Activated naive CD4-positive, alpha-beta T cell treated with anti-CD3 and anti-CD28 coated beads for 36 hours (primary cell): ENCODE measurements at regions of chr6 and their contacts with region 1.

Region 1: GRCh38 chr6:169831450-169832246 is 80.2 kb downstream of the ERMARD start:
- DNase-seq: peak; percentile 82
- H3K4me3 Mint-ChIP-seq: no peak overlapping the region
- H3K27ac Mint-ChIP-seq: no peak overlapping the region
- H3K4me1 Mint-ChIP-seq: no peaks in the 10 kb centered on the region
- H3K27me3 Mint-ChIP-seq: peaks cover 35% of the 10 kb centered on the region

Region 2: DNA sequence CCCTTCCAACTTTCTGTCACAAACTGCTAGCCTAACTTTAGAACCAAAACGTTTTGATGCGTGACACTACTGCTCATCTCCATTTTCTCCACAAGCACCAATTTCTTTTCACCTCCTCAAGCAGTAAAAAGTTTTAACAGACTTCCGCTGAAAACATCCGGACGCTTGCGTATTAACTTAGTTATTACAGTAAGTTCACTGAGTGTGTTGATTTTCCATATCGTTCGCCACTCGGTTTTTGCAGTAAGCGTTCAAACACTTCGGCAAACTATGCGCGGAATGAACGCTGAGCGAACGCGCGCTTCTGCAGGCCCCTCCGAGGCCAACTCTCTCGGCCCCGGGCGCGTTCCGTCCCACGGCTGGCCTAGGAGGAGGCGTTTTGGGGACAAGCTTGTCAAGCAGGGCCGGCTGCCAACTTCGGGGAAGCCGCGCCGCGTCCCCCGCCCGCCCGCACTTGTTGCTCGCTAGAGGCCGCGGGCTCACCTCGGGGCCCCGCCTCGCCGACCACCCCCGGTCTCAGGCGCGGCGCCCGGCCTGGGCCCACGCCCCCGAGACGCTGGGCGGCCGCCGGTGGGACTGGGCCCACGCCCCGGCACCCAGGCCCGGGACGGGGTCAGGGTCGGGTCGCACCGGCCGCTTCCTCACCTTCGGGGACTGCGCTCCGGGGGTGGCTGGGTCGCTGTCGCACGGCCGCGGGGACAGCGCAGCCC is 108.3 kb before region 1 on chr6:
- CTCF ChIA-PET with region 1: no interaction called
- intact Hi-C with region 1: no loop called
- DNase-seq: peak; percentile 62
- H3K4me3 Mint-ChIP-seq: peak overlapping the region; percentile 84
- H3K27ac Mint-ChIP-seq: peak overlapping the region; percentile 94
- H3K4me1 Mint-ChIP-seq: peaks cover 43% of the 10 kb centered on the region
- H3K27me3 Mint-ChIP-seq: no peaks in the 10 kb centered on the region

Region 3: GRCh38 chr6:169789982-169790927 is 41.4 kb before region 1 on chr6:
- CTCF ChIA-PET with region 1: interaction called, 9 read pairs
- intact Hi-C with region 1: loop called (anchors 1 kb)
- DNase-seq: peak; percentile 80
- H3K4me3 Mint-ChIP-seq: peak overlapping the region; percentile 79
- H3K27ac Mint-ChIP-seq: no peak overlapping the region
- H3K4me1 Mint-ChIP-seq: peaks cover 17% of the 10 kb centered on the region
- H3K27me3 Mint-ChIP-seq: peaks cover 24% of the 10 kb centered on the region

Region 4: DNA sequence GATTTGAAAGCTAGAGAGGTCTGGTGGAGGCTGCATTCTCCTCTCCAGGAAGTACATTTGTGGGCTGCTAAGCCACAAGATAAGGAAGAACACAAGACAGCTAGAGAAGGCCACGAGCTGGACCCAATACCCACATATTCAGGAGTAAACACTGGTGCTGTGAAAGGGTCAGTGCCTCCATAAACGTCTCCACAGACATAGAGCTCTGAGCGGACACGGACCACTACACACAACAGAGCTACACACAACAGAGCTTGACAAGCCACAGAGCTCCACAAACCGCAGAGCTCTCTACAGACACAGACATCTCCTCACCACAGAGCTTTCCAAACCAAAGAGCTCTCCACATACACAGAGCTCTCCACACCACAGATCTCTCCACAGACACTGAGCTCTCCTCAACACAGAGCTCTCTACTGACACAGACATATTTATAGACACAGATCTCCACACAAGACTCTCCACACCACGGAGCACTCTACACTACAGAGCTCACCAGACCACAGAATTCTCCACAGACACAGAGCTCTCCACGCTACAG is 28.3 kb before region 1 on chr6:
- CTCF ChIA-PET with region 1: interaction called, 32 read pairs
- intact Hi-C with region 1: no loop called
- DNase-seq: no peak
- H3K4me3 Mint-ChIP-seq: no peak overlapping the region
- H3K27ac Mint-ChIP-seq: no peak overlapping the region
- H3K4me1 Mint-ChIP-seq: peaks cover 50% of the 10 kb centered on the region
- H3K27me3 Mint-ChIP-seq: peaks cover 30% of the 10 kb centered on the region

Region 5: DNA sequence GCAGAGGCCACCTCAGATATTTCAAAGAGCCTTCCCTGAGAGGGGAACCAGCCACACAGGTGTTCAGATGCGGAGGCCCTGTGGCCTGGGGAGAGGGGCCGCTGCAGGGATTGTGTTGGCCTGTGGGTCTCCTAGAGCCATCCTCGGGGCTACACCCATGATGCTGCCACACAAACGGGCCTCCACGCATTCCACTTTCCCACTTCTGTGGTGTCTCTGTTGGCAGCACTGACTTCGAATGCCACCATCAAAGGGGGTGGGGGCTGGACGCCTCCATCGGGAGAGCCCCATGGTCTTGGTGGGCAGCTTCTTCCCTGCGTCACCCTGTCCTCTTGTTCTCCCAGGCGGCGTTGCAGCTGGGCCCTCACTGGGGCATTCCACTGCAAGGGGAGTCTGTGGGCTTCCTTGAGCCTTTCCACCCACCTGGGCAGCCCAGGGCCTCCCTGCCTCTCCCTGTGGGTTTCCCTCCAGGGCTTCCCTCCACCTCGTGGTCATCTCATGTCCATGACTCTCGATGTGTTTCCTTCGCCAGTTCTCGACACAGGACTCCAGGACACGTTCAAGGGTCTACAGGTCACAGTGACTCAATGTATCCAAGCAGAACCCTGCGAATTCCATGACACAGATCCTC is 65.3 kb after region 1 on chr6:
- CTCF ChIA-PET with region 1: no interaction called
- intact Hi-C with region 1: no loop called
- DNase-seq: no peak
- H3K4me3 Mint-ChIP-seq: no peak overlapping the region
- H3K27ac Mint-ChIP-seq: no peak overlapping the region
- H3K4me1 Mint-ChIP-seq: no peaks in the 10 kb centered on the region
- H3K27me3 Mint-ChIP-seq: no peaks in the 10 kb centered on the region

Region 6: GRCh38 chr6:169933839-169934698 is 102.4 kb after region 1 on chr6:
- CTCF ChIA-PET with region 1: interaction called, 6 read pairs
- intact Hi-C with region 1: loop called (anchors 5 kb)
- DNase-seq: no peak
- H3K4me3 Mint-ChIP-seq: no peak overlapping the region
- H3K27ac Mint-ChIP-seq: no peak overlapping the region
- H3K4me1 Mint-ChIP-seq: no peaks in the 10 kb centered on the region
- H3K27me3 Mint-ChIP-seq: peaks cover 10% of the 10 kb centered on the region

Region 7: DNA sequence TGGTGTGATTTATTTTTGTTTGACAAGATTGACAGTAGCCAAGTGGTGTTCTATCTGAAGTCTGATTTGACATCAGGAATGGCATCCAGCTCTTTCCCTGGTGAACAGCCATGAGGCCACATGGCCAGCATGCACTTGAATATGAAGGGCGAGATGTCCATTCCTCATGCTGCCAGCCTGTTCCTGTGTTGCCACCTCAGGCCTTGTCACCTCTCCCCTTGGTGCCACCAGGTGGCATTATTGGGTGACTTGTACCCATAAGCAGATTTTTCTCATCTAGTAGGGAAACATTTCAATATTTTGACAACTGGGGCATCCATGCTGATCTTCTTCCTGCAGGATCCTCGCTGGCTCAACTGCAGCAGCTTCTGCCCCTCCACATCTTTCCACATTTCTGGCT is 118.9 kb after region 1 on chr6:
- CTCF ChIA-PET with region 1: interaction called, 6 read pairs
- intact Hi-C with region 1: loop called (anchors 5 kb)
- DNase-seq: peak; percentile 66
- H3K4me3 Mint-ChIP-seq: no peak overlapping the region
- H3K27ac Mint-ChIP-seq: no peak overlapping the region
- H3K4me1 Mint-ChIP-seq: no peaks in the 10 kb centered on the region
- H3K27me3 Mint-ChIP-seq: no peaks in the 10 kb centered on the region

Region 8: DNA sequence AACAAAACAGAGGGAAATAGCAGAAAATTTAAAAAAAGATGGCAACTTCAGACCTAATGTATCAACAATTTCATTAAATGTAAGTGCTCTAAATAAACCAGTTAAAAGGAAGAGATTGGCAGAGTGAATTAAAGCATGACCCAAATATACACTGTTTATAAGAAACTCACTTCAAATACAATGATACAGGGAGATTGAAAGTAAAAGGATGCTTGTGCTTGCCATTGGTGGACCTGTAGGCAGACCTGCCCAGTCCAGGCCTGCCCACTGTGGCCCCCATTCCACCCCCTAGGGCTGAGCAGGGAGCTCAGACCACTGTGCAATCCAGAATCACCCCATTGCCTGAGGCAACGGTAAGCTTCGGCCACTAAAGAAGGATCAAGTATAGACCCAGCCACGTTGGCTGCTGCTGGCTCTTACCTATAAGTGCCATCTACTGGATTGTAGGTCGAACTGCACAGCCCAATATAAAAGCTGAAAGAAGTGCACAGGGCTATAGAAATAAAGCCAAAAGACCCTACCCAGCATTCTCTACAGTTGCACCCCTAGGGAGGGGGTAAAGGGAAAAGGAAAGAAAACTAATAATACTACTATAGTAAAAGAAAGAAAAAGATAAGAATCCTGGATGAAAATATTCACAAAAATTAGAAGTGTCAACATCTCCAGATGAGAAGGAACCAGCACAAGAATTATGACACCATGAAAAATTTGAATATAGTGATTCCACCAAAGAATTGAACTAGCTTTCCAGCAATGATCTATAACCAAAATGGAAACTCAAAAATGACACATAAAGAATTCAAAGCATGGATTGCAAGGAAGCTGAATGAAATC is 685.4 kb after region 1 on chr6:
- CTCF ChIA-PET with region 1: interaction called, 22 read pairs
- intact Hi-C with region 1: loop called (anchors 1 kb)
- DNase-seq: peak; percentile 54
- H3K4me3 Mint-ChIP-seq: peak overlapping the region; percentile 28
- H3K27ac Mint-ChIP-seq: no peak overlapping the region
- H3K4me1 Mint-ChIP-seq: no peaks in the 10 kb centered on the region
- H3K27me3 Mint-ChIP-seq: peaks cover 24% of the 10 kb centered on the region

Region 9: GRCh38 chr6:170529839-170530469 is 698.3 kb after region 1 on chr6:
- CTCF ChIA-PET with region 1: interaction called, 17 read pairs
- intact Hi-C with region 1: loop called (anchors 1 kb)
- DNase-seq: peak; percentile 84
- H3K4me3 Mint-ChIP-seq: no peak overlapping the region
- H3K27ac Mint-ChIP-seq: no peak overlapping the region
- H3K4me1 Mint-ChIP-seq: no peaks in the 10 kb centered on the region
- H3K27me3 Mint-ChIP-seq: no peaks in the 10 kb centered on the region